ENCODE measurements at regions of chr14 and their contacts with region 1.

Region 1: GRCh38 chr14:55470025-55470424 is 29.6 kb upstream of the TBPL2 start:
- DNase-seq: no peak
- H3K4me3 Mint-ChIP-seq: no peak overlapping the region
- H3K27ac Mint-ChIP-seq: no peak overlapping the region
- H3K4me1 Mint-ChIP-seq: no peaks in the 10 kb centered on the region
- H3K27me3 Mint-ChIP-seq: peaks cover 25% of the 10 kb centered on the region

Region 2: DNA sequence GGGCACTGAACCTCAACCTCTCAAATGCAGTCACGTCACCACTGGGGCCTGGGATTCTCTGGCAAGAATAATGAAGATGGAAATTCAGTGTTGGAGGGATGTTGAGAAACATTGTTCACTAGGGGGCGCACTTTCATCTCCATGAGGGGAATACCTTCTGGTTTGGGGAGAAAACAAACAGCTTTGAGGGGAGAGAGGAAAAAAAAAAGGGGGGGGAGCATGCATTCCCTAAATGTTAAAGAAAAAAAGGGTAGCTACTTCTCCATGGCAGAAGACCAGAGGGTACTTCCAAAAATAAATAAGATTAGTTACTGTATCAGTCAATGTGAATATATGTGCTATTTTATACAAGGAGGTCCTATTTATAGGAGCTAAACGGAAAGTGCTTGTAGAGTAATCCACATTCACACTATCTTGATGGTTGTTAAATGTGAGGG is 23.8 kb before region 1 on chr14:
- intact Hi-C with region 1: loop called (anchors 1 kb)
- DNase-seq: peak; percentile 22
- H3K4me3 Mint-ChIP-seq: no peak overlapping the region
- H3K27ac Mint-ChIP-seq: no peak overlapping the region
- H3K4me1 Mint-ChIP-seq: peaks cover 23% of the 10 kb centered on the region
- H3K27me3 Mint-ChIP-seq: no peaks in the 10 kb centered on the region

Region 3: DNA sequence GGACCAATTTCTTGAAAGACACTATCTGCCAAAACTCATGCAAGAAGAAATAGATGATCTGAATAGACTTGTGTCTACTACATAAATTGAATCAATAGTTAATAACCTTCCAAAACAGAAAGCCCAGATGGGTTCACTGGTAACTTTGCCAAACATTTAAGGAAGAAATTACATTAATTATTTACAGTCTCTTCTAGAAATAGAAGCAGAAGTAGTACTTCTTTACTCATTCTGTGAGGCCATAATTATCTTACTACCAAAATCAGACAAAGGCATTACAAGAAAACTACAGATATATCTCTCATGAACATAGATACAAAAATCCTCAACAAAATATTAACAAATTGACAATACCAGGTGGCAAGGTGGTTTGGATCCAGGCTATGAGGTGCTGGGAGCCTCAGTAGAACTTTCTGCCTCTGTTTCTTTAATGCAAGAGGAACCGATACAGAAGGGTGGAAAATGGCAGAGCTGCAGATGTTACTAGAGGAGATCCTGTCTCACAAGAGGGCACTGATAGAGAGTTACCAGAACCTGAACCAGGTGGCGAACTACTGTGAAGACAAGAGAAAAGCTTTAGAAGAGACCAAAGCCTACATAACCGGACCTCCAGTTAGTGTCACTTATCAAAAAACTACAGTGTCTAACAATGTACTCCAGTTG is 76.3 kb after region 1 on chr14:
- intact Hi-C with region 1: loop called (anchors 10 kb)
- DNase-seq: no peak
- H3K4me3 Mint-ChIP-seq: no peak overlapping the region
- H3K27ac Mint-ChIP-seq: no peak overlapping the region
- H3K4me1 Mint-ChIP-seq: peaks cover 8% of the 10 kb centered on the region
- H3K27me3 Mint-ChIP-seq: peaks cover 7% of the 10 kb centered on the region